Sciatic nerve (tissue), 2 donors: ENCODE measurements at regions of chr7 and their contacts with region 1.

Region 1: DNA sequence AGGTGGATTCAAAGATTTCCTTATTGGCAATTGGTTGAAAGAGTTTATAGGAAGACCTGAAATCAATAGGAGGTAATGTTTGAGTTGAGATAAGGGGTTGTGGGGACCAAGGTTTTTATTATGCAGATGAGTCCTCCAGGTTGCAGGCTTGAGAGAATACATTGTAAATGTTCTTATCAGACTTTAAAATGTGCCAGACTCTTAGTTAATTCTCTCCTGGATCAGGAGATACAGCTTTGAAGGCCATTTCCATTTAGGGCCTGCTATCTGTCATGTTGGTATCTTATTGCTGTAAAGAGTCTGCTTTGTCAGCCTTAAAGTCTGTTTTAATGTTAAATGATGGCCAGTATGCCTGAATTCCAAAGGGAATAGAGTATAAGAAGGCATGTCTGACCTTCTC is 61.8 kb upstream of the CALCR start:
- DNase-seq: no peak
- ATAC-seq: no peak

Region 2: GRCh38 chr7:93601363-93601762 is 34.9 kb before region 1 on chr7:
- intact Hi-C with region 1: loop called (anchors 1 kb)
- DNase-seq: no peak
- ATAC-seq: no peak

Region 3: GRCh38 chr7:95004618-95005247 is 1368.5 kb after region 1 on chr7:
- intact Hi-C with region 1: no loop called
- DNase-seq: no peak
- ATAC-seq: no peak